CD4-positive, alpha-beta T cell (primary cell): ENCODE measurements at regions of chr10 and their contacts with region 1.

Region 1: GRCh38 chr10:96129387-96130325 is at the start of gene ZNF518A:
- DNase-seq: peak; percentile 79 to 97 (median 87)
- ATAC-seq: peak; percentile 82
- H3K4me3 ChIP-seq: peak within 1 kb of the TSS; percentile 67
- H3K4me3 Mint-ChIP-seq: peak within 1 kb of the TSS; percentile 93
- H3K27ac ChIP-seq: peak within 1 kb of the TSS; percentile 93 to 98
- H3K27ac Mint-ChIP-seq: peak within 1 kb of the TSS; percentile 99
- H3K4me1 ChIP-seq: peaks cover 14% of the 10 kb centered on the region
- H3K4me1 Mint-ChIP-seq: peaks cover 27% of the 10 kb centered on the region
- H3K27me3 ChIP-seq: peaks cover 7 to 36% of the 10 kb centered on the region in 2 experiments
- H3K27me3 Mint-ChIP-seq: peaks cover 62% of the 10 kb centered on the region
- CTCF ChIP-seq: no peak
- total RNA-seq, gene ZNF518A: 7.4 to 7.9 TPM

Region 2: DNA sequence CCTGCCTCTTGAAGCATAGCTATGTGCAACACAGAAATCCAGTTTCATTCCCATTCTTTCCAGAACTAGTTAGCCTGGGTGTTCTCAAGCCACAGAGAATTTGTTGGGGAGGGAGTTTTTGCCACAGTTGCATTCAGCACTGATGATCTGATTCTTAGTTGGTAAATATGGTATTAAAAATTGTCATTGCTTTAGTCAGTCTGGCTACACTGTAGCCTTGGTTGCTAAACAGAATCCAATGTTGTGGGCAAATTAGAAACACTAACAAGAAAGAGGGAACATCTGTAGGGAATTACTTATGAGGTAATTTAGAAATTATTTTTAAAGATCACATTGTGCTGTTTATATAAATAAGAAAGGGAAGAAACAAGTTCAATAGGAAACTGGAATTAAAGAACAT is 278.9 kb before region 1 on chr10:
- CTCF ChIA-PET with region 1: no interaction called
- POLR2A ChIA-PET with region 1: no interaction called
- intact Hi-C with region 1: no loop called
- DNase-seq: no peak
- ATAC-seq: no peak
- H3K4me3 ChIP-seq: no peak overlapping the region
- H3K4me3 Mint-ChIP-seq: no peak overlapping the region
- H3K27ac ChIP-seq: no peak overlapping the region
- H3K27ac Mint-ChIP-seq: no peak overlapping the region
- H3K4me1 ChIP-seq: no peaks in the 10 kb centered on the region
- H3K4me1 Mint-ChIP-seq: no peaks in the 10 kb centered on the region
- H3K27me3 ChIP-seq: no peaks in the 10 kb centered on the region
- H3K27me3 Mint-ChIP-seq: peaks cover 5% of the 10 kb centered on the region
- CTCF ChIP-seq: no peak

Region 3: GRCh38 chr10:95907456-95908253 is 222.0 kb before region 1 on chr10 and contains the start of gene CC2D2B:
- CTCF ChIA-PET with region 1: no interaction called
- POLR2A ChIA-PET with region 1: interaction called, 7 read pairs
- intact Hi-C with region 1: loop called in 1 of 2 experiments (anchors 10 kb)
- DNase-seq: peak; percentile 24 to 75 (median 52)
- ATAC-seq: peak; percentile 80
- H3K4me3 ChIP-seq: peak within 1 kb of the TSS; percentile 83
- H3K4me3 Mint-ChIP-seq: peak within 1 kb of the TSS; percentile 86
- H3K27ac ChIP-seq: peak within 1 kb of the TSS; percentile 14 to 39
- H3K27ac Mint-ChIP-seq: peak within 1 kb of the TSS; percentile 39
- H3K4me1 ChIP-seq: peaks cover 3% of the 10 kb centered on the region
- H3K4me1 Mint-ChIP-seq: peaks cover 12% of the 10 kb centered on the region
- H3K27me3 ChIP-seq: no peaks in the 10 kb centered on the region
- H3K27me3 Mint-ChIP-seq: no peaks in the 10 kb centered on the region
- CTCF ChIP-seq: no peak
- total RNA-seq, gene CC2D2B: not detected

Region 4: GRCh38 chr10:96089670-96090462 is 39.8 kb before region 1 on chr10:
- CTCF ChIA-PET with region 1: interaction called, 8 read pairs
- POLR2A ChIA-PET with region 1: interaction called, 250 read pairs
- intact Hi-C with region 1: loop called (anchors 1 kb)
- DNase-seq: peak; percentile 86 to 97 (median 90)
- ATAC-seq: peak; percentile 84
- H3K4me3 ChIP-seq: peak overlapping the region; percentile 78
- H3K4me3 Mint-ChIP-seq: peak overlapping the region; percentile 93
- H3K27ac ChIP-seq: peak overlapping the region; percentile 90 to 97
- H3K27ac Mint-ChIP-seq: peak overlapping the region; percentile 98
- H3K4me1 ChIP-seq: peaks cover 13% of the 10 kb centered on the region
- H3K4me1 Mint-ChIP-seq: peaks cover 16% of the 10 kb centered on the region
- H3K27me3 ChIP-seq: peaks cover 14 to 28% of the 10 kb centered on the region in 2 experiments
- H3K27me3 Mint-ChIP-seq: peaks cover 43% of the 10 kb centered on the region
- CTCF ChIP-seq: no peak

Region 5: GRCh38 chr10:96292971-96293920 is 163.6 kb after region 1 on chr10:
- CTCF ChIA-PET with region 1: no interaction called
- POLR2A ChIA-PET with region 1: no interaction called
- intact Hi-C with region 1: loop called in 1 of 2 experiments (anchors 5 kb)
- DNase-seq: peak in 6 of 14 experiments; percentile 2 to 52 (median 24)
- ATAC-seq: no peak
- H3K4me3 ChIP-seq: no peak overlapping the region
- H3K4me3 Mint-ChIP-seq: no peak overlapping the region
- H3K27ac ChIP-seq: no peak overlapping the region
- H3K27ac Mint-ChIP-seq: peak overlapping the region; percentile 5
- H3K4me1 ChIP-seq: peaks cover 7% of the 10 kb centered on the region
- H3K4me1 Mint-ChIP-seq: peaks cover 34% of the 10 kb centered on the region
- H3K27me3 ChIP-seq: no peaks in the 10 kb centered on the region
- H3K27me3 Mint-ChIP-seq: no peaks in the 10 kb centered on the region
- CTCF ChIP-seq: peak; percentile 48